Heart left ventricle (tissue), 16 donors: ENCODE measurements at regions of chr16 and their contacts with region 1.

Region 1: DNA sequence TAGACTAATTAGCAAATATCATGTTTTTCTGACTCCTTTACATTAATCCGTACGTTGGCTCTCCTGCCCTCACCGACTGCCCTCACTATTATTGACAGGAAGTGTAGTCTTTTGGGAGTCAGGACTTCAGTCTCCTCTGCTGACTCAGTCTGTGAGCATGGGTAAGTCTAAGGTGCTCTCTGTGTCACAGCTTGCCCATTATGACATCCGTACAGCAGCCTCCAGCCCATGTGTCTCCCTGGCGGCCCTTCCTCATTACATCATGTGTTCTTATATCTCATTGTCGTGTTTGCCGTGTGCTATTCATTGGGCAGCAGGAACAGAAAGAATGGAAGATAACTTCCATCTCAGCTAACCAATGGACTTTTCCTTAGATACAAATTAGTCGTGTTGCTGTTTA is 77.5 kb downstream of the MRTFB start:
- DNase-seq: no peak
- ATAC-seq: peak in 2 of 4 donors; percentile 26 to 29
- H3K4me3 ChIP-seq: no peak overlapping the region
- H3K27ac ChIP-seq: no peak overlapping the region
- H3K4me1 ChIP-seq: peaks cover 0 to 38% (median 7%) of the 10 kb centered on the region in 12 donors
- H3K27me3 ChIP-seq: no peaks in the 10 kb centered on the region
- CTCF ChIP-seq: no peak
- POLR2A ChIP-seq: no peak

Region 2: GRCh38 chr16:13997933-13998332 is 150.6 kb before region 1 on chr16:
- intact Hi-C with region 1: no loop called
- DNase-seq: no peak
- ATAC-seq: no peak
- H3K4me3 ChIP-seq: no peak overlapping the region
- H3K27ac ChIP-seq: peak overlapping the region in 8 of 12 donors; percentile 14 to 90 (median 82)
- H3K4me1 ChIP-seq: peaks cover 0 to 70% (median 47%) of the 10 kb centered on the region in 12 donors
- H3K27me3 ChIP-seq: no peaks in the 10 kb centered on the region
- CTCF ChIP-seq: no peak
- POLR2A ChIP-seq: no peak

Region 3: DNA sequence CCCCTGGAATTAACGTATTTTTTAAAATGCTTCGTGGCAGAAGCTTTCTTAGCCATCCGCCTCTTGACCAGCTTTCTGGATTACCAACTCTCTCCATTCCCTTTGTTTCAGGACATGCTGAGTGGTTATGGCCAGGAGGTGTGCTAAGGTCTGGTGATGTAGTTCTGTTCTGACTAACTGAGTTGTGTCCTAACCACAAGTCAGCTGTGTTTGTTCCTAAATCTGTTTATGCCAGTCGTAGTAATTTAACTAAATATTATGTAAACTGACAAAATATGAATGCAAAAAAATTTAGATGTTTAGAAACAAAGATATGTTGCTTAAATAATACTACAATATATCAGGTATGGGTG is 15.9 kb before region 1 on chr16:
- intact Hi-C with region 1: no loop called
- DNase-seq: no peak
- ATAC-seq: no peak
- H3K4me3 ChIP-seq: no peak overlapping the region
- H3K27ac ChIP-seq: no peak overlapping the region
- H3K4me1 ChIP-seq: peaks cover 0 to 25% (median 7%) of the 10 kb centered on the region in 12 donors
- H3K27me3 ChIP-seq: no peaks in the 10 kb centered on the region
- CTCF ChIP-seq: no peak
- POLR2A ChIP-seq: no peak

Region 4: GRCh38 chr16:14285513-14286385 is 137.2 kb after region 1 on chr16:
- intact Hi-C with region 1: loop called in 1 of 10 experiments (anchors 5 kb)
- DNase-seq: peak; percentile 92 to 95 (median 93)
- ATAC-seq: peak; percentile 85 to 96 (median 93)
- H3K4me3 ChIP-seq: peak overlapping the region; percentile 50 to 98 (median 89)
- H3K27ac ChIP-seq: peak overlapping the region; percentile 11 to 90 (median 82)
- H3K4me1 ChIP-seq: peaks cover 0 to 22% (median 8%) of the 10 kb centered on the region in 12 donors
- H3K27me3 ChIP-seq: no peaks in the 10 kb centered on the region
- CTCF ChIP-seq: no peak
- POLR2A ChIP-seq: peak in 1 of 2 donors; percentile 49

Region 5: DNA sequence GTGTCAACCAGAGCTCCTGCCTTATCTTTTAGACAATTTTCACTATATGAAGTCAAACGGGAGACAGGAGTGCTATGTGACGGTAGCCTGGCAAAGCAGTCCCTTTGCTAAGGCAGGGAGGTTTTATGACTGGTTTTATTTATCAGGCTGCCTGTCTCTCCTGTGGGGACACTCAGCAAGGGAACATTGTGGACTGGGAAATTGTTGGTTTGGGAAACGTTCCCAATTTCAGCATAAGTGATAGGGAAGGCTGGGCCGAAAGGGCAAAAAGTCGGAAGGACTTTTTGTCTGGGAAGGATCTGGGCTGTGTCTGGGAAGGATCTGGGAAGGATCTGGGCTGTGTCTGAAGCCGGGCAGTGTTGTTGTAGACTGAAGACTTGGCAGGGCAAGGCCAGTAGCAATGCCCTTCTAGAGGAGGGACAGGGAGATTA is 270.2 kb after region 1 on chr16:
- intact Hi-C with region 1: no loop called
- DNase-seq: peak in 3 of 5 donors; percentile 23 to 64 (median 43)
- ATAC-seq: peak; percentile 87 to 90 (median 88)
- H3K4me3 ChIP-seq: peak overlapping the region in 3 of 12 donors; percentile 16 to 22 (median 20)
- H3K27ac ChIP-seq: peak overlapping the region; percentile 58 to 85 (median 69)
- H3K4me1 ChIP-seq: peaks cover 0 to 26% (median 9%) of the 10 kb centered on the region in 12 donors
- H3K27me3 ChIP-seq: no peaks in the 10 kb centered on the region
- CTCF ChIP-seq: no peak
- POLR2A ChIP-seq: no peak